Vagina (tissue), 2 donors: ENCODE measurements at regions of chr2 and their contacts with region 1.

Region 1: DNA sequence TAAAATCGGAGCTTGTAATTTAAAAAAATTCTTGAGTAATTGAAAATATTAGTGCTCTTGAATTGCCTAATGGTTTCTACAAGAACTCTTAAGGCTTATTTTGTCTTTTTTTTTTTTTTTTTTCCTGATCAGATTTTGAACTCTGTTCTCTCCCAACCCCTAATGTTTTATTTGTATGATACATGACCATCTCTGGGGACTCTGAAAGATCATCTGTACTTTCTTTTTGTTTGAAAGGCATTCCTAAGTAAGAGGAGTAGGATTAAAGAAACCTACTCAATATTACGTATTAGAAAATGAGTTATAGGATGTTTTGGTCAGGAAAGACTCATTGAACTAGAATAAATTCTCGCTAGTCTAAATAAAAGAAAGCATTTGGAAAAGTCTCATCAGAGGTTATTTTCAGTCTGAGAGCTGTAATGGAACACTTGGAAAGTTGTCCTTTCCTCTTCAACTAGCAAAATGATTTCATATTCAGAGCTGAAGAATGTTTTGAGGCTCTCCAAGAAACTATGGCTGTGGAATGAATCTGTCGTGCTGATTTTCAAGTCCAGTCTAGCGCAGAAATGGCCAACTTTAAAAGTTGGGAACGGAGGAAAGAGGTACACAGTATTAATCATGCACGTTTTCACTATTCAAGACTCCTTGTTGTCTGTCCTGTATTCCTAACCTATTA is 182.7 kb downstream of the PRPF40A start:
- DNase-seq: no peak
- H3K4me3 ChIP-seq: no peak overlapping the region
- H3K27ac ChIP-seq: no peak overlapping the region
- H3K4me1 ChIP-seq: no peaks in the 10 kb centered on the region
- H3K27me3 ChIP-seq: no peaks in the 10 kb centered on the region
- CTCF ChIP-seq: no peak
- POLR2A ChIP-seq: no peak

Region 2: DNA sequence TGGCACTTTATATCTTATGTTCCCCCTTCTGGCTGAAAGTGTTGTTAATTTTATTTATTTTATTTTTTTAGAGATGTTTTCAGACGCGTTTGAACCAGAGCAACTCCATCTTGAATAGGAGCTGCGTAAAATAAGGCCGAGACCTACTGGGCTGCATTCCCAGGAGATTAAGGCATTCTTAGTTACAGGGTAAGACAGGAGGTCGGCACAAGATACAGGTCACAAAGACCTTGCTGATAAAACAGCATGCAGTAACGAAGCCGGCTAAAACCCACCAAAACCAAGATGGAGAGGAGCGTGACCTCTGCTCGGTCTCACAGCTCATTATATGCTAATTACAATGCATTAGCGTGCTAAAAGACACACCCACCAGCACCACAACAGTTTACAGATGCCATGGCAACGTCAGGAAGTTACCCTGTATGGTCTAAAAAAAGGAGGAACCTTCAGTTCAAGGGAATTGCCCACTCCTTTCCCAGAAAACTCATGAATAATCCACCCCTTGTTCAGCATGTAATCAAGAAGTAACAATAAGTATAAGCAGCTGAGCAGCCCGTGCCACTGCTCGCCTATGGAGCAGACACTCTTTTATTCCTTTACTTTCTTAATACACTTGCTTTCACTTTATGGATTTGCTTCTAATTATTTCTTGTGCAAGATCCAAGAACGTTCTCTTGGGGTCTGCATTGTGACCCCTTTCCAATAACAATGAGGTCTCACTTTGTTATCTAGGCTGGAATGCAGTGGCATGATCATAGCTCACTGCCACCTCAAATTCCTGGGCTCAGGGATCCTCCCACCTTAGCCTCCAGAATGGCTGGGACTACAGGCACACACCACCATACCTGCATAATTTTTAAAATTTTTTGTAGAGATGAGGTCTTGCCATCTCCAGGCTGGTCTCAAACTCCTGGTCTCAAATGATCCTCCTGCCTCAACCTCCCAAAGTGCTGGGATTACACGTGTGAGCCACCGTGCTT is 491.7 kb before region 1 on chr2:
- intact Hi-C with region 1: loop called (anchors 5 kb)
- DNase-seq: no peak
- H3K4me3 ChIP-seq: no peak overlapping the region
- H3K27ac ChIP-seq: no peak overlapping the region
- H3K4me1 ChIP-seq: peaks cover 10% of the 10 kb centered on the region
- H3K27me3 ChIP-seq: no peaks in the 10 kb centered on the region
- CTCF ChIP-seq: no peak
- POLR2A ChIP-seq: no peak

Region 3: GRCh38 chr2:152627351-152627957 is 92.9 kb after region 1 on chr2:
- intact Hi-C with region 1: no loop called
- DNase-seq: no peak
- H3K4me3 ChIP-seq: no peak overlapping the region
- H3K27ac ChIP-seq: no peak overlapping the region
- H3K4me1 ChIP-seq: no peaks in the 10 kb centered on the region
- H3K27me3 ChIP-seq: no peaks in the 10 kb centered on the region
- CTCF ChIP-seq: peak; percentile 5 to 47 (median 10)
- POLR2A ChIP-seq: no peak

Region 4: GRCh38 chr2:152861349-152861942 is 326.8 kb after region 1 on chr2:
- intact Hi-C with region 1: no loop called
- DNase-seq: no peak
- H3K4me3 ChIP-seq: no peak overlapping the region
- H3K27ac ChIP-seq: no peak overlapping the region
- H3K4me1 ChIP-seq: no peaks in the 10 kb centered on the region
- H3K27me3 ChIP-seq: no peaks in the 10 kb centered on the region
- CTCF ChIP-seq: peak in 1 of 3 experiments; percentile 29
- POLR2A ChIP-seq: no peak